Activated CD4-positive, alpha-beta T cell treated with anti-CD3 and anti-CD28 coated beads for 36 hours (primary cell): ENCODE measurements at regions of chr14 and their contacts with region 1.

Region 1: GRCh38 chr14:23006544-23007419 is 3.2 kb downstream of the C14orf93 start:
- DNase-seq: peak; percentile 98
- ATAC-seq: peak; percentile 98
- H3K4me3 Mint-ChIP-seq: peak overlapping the region; percentile 95
- H3K27ac Mint-ChIP-seq: peak overlapping the region; percentile 99
- H3K4me1 Mint-ChIP-seq: peaks cover 45% of the 10 kb centered on the region
- H3K27me3 Mint-ChIP-seq: no peaks in the 10 kb centered on the region

Region 2: GRCh38 chr14:22973217-22974032 is 33.4 kb before region 1 on chr14:
- CTCF ChIA-PET with region 1: interaction called, 12 read pairs
- POLR2A ChIA-PET with region 1: no interaction called
- intact Hi-C with region 1: no loop called
- DNase-seq: peak; percentile 56
- ATAC-seq: peak; percentile 71
- H3K4me3 Mint-ChIP-seq: no peak overlapping the region
- H3K27ac Mint-ChIP-seq: no peak overlapping the region
- H3K4me1 Mint-ChIP-seq: no peaks in the 10 kb centered on the region
- H3K27me3 Mint-ChIP-seq: no peaks in the 10 kb centered on the region

Region 3: GRCh38 chr14:23025151-23025814 is 18.5 kb after region 1 on chr14:
- CTCF ChIA-PET with region 1: interaction called, 34 read pairs
- POLR2A ChIA-PET with region 1: interaction called, 8 read pairs
- intact Hi-C with region 1: no loop called
- DNase-seq: peak; percentile 70
- ATAC-seq: peak; percentile 58
- H3K4me3 Mint-ChIP-seq: peak overlapping the region; percentile 37
- H3K27ac Mint-ChIP-seq: peak overlapping the region; percentile 90
- H3K4me1 Mint-ChIP-seq: peaks cover 72% of the 10 kb centered on the region
- H3K27me3 Mint-ChIP-seq: no peaks in the 10 kb centered on the region

Region 4: GRCh38 chr14:23052182-23052623 is 45.4 kb after region 1 on chr14:
- CTCF ChIA-PET with region 1: interaction called, 61 read pairs
- POLR2A ChIA-PET with region 1: no interaction called
- intact Hi-C with region 1: loop called in 1 of 2 experiments (anchors 5 kb)
- DNase-seq: peak; percentile 44
- ATAC-seq: no peak
- H3K4me3 Mint-ChIP-seq: no peak overlapping the region
- H3K27ac Mint-ChIP-seq: no peak overlapping the region
- H3K4me1 Mint-ChIP-seq: peaks cover 11% of the 10 kb centered on the region
- H3K27me3 Mint-ChIP-seq: peaks cover 2% of the 10 kb centered on the region